Tibial artery (tissue), 4 donors: ENCODE measurements at regions of chr13 and their contacts with region 1.

Region 1: GRCh38 chr13:70613295-70613694 is 505.0 kb upstream of the KLHL1 start:
- DNase-seq: no peak
- H3K4me3 ChIP-seq: no peak overlapping the region
- H3K27ac ChIP-seq: no peak overlapping the region
- H3K4me1 ChIP-seq: no peaks in the 10 kb centered on the region
- H3K27me3 ChIP-seq: no peaks in the 10 kb centered on the region
- CTCF ChIP-seq: no peak

Region 2: DNA sequence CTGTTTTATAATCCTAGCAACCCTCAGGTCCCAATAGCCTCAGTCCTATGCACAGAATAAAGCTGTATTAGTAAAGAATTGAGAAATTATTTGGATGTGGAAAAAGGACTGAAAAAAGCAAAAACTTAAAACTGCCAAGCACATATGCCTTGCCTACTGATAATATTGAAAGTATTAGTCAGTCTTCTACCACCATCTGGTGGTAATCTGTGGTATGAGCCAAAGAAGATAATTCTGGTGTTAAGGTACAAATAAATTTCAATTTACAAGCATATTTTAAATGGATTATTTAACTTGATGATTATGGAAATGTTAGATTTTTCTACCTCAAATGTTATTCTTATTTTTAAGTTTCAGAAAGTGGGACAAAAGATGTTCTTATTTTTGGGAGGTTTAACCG is 44.7 kb before region 1 on chr13:
- intact Hi-C with region 1: no loop called
- DNase-seq: no peak
- H3K4me3 ChIP-seq: no peak overlapping the region
- H3K27ac ChIP-seq: no peak overlapping the region
- H3K4me1 ChIP-seq: no peaks in the 10 kb centered on the region
- H3K27me3 ChIP-seq: no peaks in the 10 kb centered on the region
- CTCF ChIP-seq: peak; percentile 39 to 46

Region 3: GRCh38 chr13:70630247-70630646 is 17.0 kb after region 1 on chr13:
- intact Hi-C with region 1: loop called (anchors 2 kb)
- DNase-seq: no peak
- H3K4me3 ChIP-seq: no peak overlapping the region
- H3K27ac ChIP-seq: no peak overlapping the region
- H3K4me1 ChIP-seq: no peaks in the 10 kb centered on the region
- H3K27me3 ChIP-seq: no peaks in the 10 kb centered on the region
- CTCF ChIP-seq: no peak

Region 4: GRCh38 chr13:70736622-70737317 is 123.5 kb after region 1 on chr13:
- intact Hi-C with region 1: no loop called
- DNase-seq: no peak
- H3K4me3 ChIP-seq: no peak overlapping the region
- H3K27ac ChIP-seq: no peak overlapping the region
- H3K4me1 ChIP-seq: no peaks in the 10 kb centered on the region
- H3K27me3 ChIP-seq: no peaks in the 10 kb centered on the region
- CTCF ChIP-seq: no peak

Region 5: DNA sequence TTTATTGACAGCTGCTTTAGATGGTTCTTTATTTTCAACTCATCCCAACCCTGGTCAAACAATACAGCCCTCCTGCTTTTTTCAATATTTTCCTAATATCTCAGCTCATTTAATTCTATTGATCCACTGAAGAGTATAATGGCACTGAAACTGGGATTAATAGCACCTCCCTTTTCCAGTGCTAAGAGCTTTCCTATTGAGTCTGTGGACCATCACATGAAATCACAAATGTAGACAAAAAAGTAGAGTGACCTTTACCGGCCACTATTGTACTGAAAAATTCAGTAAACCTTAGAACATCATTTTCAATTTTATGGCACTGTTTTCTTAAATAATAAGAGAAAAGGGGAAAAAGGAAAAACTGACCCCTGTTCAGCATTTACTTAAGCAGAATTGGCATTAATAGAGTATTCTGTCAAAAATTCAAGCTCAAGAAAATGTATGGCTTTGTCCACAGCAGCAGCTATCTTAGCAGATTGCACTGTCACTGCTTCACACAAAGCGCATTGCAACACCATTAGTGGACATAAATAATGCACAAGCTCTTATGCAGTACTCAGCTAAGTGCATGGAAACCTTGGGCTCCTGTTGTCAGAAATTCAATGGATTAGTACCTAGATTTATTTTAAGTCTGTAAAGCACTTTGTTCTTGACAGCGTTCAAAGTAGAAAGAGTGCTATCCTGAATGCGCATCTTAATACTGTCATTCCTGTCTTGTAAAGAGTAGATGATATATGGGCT is 345.9 kb after region 1 on chr13:
- intact Hi-C with region 1: no loop called
- DNase-seq: no peak
- H3K4me3 ChIP-seq: no peak overlapping the region
- H3K27ac ChIP-seq: no peak overlapping the region
- H3K4me1 ChIP-seq: no peaks in the 10 kb centered on the region
- H3K27me3 ChIP-seq: no peaks in the 10 kb centered on the region
- CTCF ChIP-seq: no peak